CD4-positive, alpha-beta T cell (primary cell): ENCODE measurements at regions of chr12 and their contacts with region 1.

Region 1: GRCh38 chr12:113221181-113221997 is at the start of gene TPCN1:
- DNase-seq: peak; percentile 97 to 100 (median 98)
- ATAC-seq: peak; percentile 91
- H3K4me3 ChIP-seq: peak within 1 kb of the TSS; percentile 91
- H3K4me3 Mint-ChIP-seq: peak within 1 kb of the TSS; percentile 92
- H3K27ac ChIP-seq: peak within 1 kb of the TSS; percentile 61 to 74
- H3K27ac Mint-ChIP-seq: peak within 1 kb of the TSS; percentile 77
- H3K4me1 ChIP-seq: peaks cover 45% of the 10 kb centered on the region
- H3K4me1 Mint-ChIP-seq: peaks cover 47% of the 10 kb centered on the region
- H3K27me3 ChIP-seq: no peaks in the 10 kb centered on the region
- H3K27me3 Mint-ChIP-seq: no peaks in the 10 kb centered on the region
- CTCF ChIP-seq: no peak
- total RNA-seq, gene TPCN1: 52.4 to 59.7 TPM

Region 2: GRCh38 chr12:113208041-113208934 is 13.1 kb before region 1 on chr12:
- CTCF ChIA-PET with region 1: no interaction called
- POLR2A ChIA-PET with region 1: interaction called, 24 read pairs
- intact Hi-C with region 1: loop called in 1 of 2 experiments (anchors 1 kb)
- DNase-seq: peak in 11 of 14 experiments; percentile 11 to 88 (median 39)
- ATAC-seq: peak; percentile 75
- H3K4me3 ChIP-seq: no peak overlapping the region
- H3K4me3 Mint-ChIP-seq: peak overlapping the region; percentile 75
- H3K27ac ChIP-seq: peak overlapping the region; percentile 57 to 59
- H3K27ac Mint-ChIP-seq: peak overlapping the region; percentile 82
- H3K4me1 ChIP-seq: peaks cover 44% of the 10 kb centered on the region
- H3K4me1 Mint-ChIP-seq: peaks cover 41% of the 10 kb centered on the region
- H3K27me3 ChIP-seq: no peaks in the 10 kb centered on the region
- H3K27me3 Mint-ChIP-seq: no peaks in the 10 kb centered on the region
- CTCF ChIP-seq: no peak

Region 3: GRCh38 chr12:113232840-113233585 is 11.6 kb after region 1 on chr12:
- CTCF ChIA-PET with region 1: interaction called, 17 read pairs
- POLR2A ChIA-PET with region 1: interaction called, 27 read pairs
- intact Hi-C with region 1: no loop called
- DNase-seq: peak; percentile 46 to 90 (median 72)
- ATAC-seq: peak; percentile 96
- H3K4me3 ChIP-seq: peak overlapping the region; percentile 39
- H3K4me3 Mint-ChIP-seq: peak overlapping the region; percentile 93
- H3K27ac ChIP-seq: peak overlapping the region in 1 of 2 donors; percentile 46
- H3K27ac Mint-ChIP-seq: peak overlapping the region; percentile 80
- H3K4me1 ChIP-seq: peaks cover 65% of the 10 kb centered on the region
- H3K4me1 Mint-ChIP-seq: peaks cover 63% of the 10 kb centered on the region
- H3K27me3 ChIP-seq: no peaks in the 10 kb centered on the region
- H3K27me3 Mint-ChIP-seq: no peaks in the 10 kb centered on the region
- CTCF ChIP-seq: peak; percentile 32

Region 4: DNA sequence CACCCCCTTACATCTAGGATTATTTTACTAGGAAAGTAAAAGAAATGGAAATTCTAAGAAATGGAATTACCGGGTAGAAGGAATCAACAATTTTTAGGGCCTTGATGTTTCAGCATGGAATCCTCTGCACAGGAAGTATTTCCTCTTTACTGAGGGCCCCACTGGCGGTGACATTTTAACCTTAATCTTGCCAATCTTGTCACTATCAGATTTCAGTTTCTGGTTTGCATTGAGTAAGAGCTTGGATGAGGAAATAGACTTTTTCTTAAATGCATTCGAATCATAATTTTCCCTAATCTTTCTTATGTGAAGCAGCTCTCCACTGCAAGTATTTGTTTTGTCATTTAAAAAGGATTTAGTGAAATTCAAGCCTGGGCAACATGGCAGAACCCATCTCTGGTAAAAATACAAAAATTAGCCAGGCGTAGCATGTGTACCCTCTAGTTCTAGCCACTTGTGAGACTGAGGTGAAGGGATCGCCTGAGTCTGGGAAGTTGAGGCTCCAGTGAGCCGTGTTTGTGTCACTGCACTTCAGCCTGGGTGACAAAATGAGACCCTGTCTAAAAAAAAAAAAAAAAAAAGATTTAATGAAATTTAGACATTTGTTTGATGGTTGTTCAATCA is 40.6 kb after region 1 on chr12:
- CTCF ChIA-PET with region 1: no interaction called
- POLR2A ChIA-PET with region 1: interaction called, 11 read pairs
- intact Hi-C with region 1: no loop called
- DNase-seq: peak in 6 of 14 experiments; percentile 8 to 70 (median 37)
- ATAC-seq: peak; percentile 52
- H3K4me3 ChIP-seq: no peak overlapping the region
- H3K4me3 Mint-ChIP-seq: peak overlapping the region; percentile 27
- H3K27ac ChIP-seq: peak overlapping the region; percentile 48 to 63
- H3K27ac Mint-ChIP-seq: peak overlapping the region; percentile 80
- H3K4me1 ChIP-seq: peaks cover 42% of the 10 kb centered on the region
- H3K4me1 Mint-ChIP-seq: peaks cover 46% of the 10 kb centered on the region
- H3K27me3 ChIP-seq: no peaks in the 10 kb centered on the region
- H3K27me3 Mint-ChIP-seq: no peaks in the 10 kb centered on the region
- CTCF ChIP-seq: no peak

Region 5: GRCh38 chr12:113334786-113335540 is 113.6 kb after region 1 on chr12 and contains the start of gene SLC8B1:
- CTCF ChIA-PET with region 1: interaction called, 4 read pairs
- POLR2A ChIA-PET with region 1: interaction called, 6 read pairs
- intact Hi-C with region 1: loop called in 1 of 2 experiments (anchors 5 kb)
- DNase-seq: peak; percentile 69 to 95 (median 86)
- ATAC-seq: peak; percentile 97
- H3K4me3 ChIP-seq: peak within 1 kb of the TSS; percentile 94
- H3K4me3 Mint-ChIP-seq: peak within 1 kb of the TSS; percentile 99
- H3K27ac ChIP-seq: peak within 1 kb of the TSS in 1 of 2 donors; percentile 25
- H3K27ac Mint-ChIP-seq: peak within 1 kb of the TSS; percentile 87
- H3K4me1 ChIP-seq: peaks cover 33% of the 10 kb centered on the region
- H3K4me1 Mint-ChIP-seq: peaks cover 45% of the 10 kb centered on the region
- H3K27me3 ChIP-seq: no peaks in the 10 kb centered on the region
- H3K27me3 Mint-ChIP-seq: no peaks in the 10 kb centered on the region
- CTCF ChIP-seq: no peak
- total RNA-seq, gene SLC8B1: 85.3 to 92.7 TPM

Region 6: DNA sequence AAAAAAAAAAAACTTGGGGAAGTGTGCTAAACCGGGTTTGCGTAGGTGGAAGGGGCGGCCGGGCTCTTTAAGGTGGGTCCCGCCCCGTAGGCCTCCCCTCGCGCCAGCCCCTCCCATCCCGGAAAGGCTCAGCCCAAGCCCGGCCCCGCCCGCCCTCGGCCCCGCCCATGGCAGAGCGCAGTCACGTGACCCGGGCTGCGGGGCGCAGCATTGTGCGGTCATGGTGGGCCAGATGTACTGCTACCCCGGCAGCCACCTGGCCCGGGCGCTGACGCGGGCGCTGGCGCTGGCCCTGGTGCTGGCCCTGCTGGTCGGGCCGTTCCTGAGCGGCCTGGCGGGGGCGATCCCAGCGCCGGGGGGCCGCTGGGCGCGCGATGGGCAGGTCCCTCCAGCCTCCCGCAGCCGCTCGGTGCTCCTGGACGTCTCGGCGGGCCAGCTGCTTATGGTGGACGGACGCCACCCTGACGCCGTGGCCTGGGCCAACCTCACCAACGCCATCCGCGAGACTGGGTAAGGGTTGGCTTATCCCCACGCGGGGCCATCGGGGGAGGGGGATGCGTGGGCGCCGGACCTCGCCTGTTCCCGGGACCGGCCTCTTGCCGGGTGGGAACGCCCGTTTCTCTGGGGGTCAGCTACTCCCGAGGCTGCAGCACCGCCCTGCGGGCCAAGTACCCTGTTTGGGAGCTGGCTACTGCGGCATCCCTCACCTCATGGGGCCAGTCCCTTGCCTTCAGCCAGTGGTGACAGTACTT is 137.2 kb after region 1 on chr12 and contains the start of gene PLBD2:
- CTCF ChIA-PET with region 1: no interaction called
- POLR2A ChIA-PET with region 1: no interaction called
- intact Hi-C with region 1: loop called in 1 of 2 experiments (anchors 5 kb)
- DNase-seq: peak; percentile 91 to 98 (median 94)
- ATAC-seq: peak; percentile 92
- H3K4me3 ChIP-seq: peak within 1 kb of the TSS; percentile 85
- H3K4me3 Mint-ChIP-seq: peak within 1 kb of the TSS; percentile 93
- H3K27ac ChIP-seq: peak within 1 kb of the TSS; percentile 67 to 82
- H3K27ac Mint-ChIP-seq: peak within 1 kb of the TSS; percentile 95
- H3K4me1 ChIP-seq: peaks cover 22% of the 10 kb centered on the region
- H3K4me1 Mint-ChIP-seq: peaks cover 24% of the 10 kb centered on the region
- H3K27me3 ChIP-seq: no peaks in the 10 kb centered on the region
- H3K27me3 Mint-ChIP-seq: no peaks in the 10 kb centered on the region
- CTCF ChIP-seq: no peak
- total RNA-seq, gene PLBD2: 10.4 to 12.2 TPM